GM12878 (cell line): ENCODE measurements at regions of chr7 and their contacts with region 1.

Region 1: GRCh38 chr7:94087664-94088352 is 83.7 kb upstream of the BET1 start:
- DNase-seq: peak; percentile 66
- ATAC-seq: peak; percentile 97
- H3K4me3 ChIP-seq: no peak overlapping the region
- H3K27ac ChIP-seq: no peak overlapping the region
- H3K4me1 ChIP-seq: no peaks in the 10 kb centered on the region
- H3K27me3 ChIP-seq: no peaks in the 10 kb centered on the region; a peak in 1 of 4 replicates
- CTCF ChIP-seq: peak; percentile 77 to 89 (median 87); a peak in 5 of 6 replicates
- EP300 ChIP-seq: no peak
- POLR2A ChIP-seq: no peak
- RAD21 ChIP-seq: peak; percentile 96

Region 2: GRCh38 chr7:93799750-93800357 is 288.0 kb before region 1 on chr7:
- CTCF ChIA-PET with region 1: interaction called, 16 read pairs
- POLR2A ChIA-PET with region 1: no interaction called
- RAD21 ChIA-PET with region 1: interaction called, 7 read pairs
- SMC1A ChIA-PET with region 1: interaction called, 8 read pairs
- in situ Hi-C with region 1: loop called (anchors 10 kb)
- intact Hi-C with region 1: loop called (anchors 1 kb)
- DNase-seq: no peak
- ATAC-seq: peak; percentile 54
- H3K4me3 ChIP-seq: no peak overlapping the region
- H3K27ac ChIP-seq: no peak overlapping the region
- H3K4me1 ChIP-seq: no peaks in the 10 kb centered on the region
- H3K27me3 ChIP-seq: no peaks in the 10 kb centered on the region
- CTCF ChIP-seq: peak; percentile 36 to 51 (median 41); a peak in 4 of 6 replicates
- EP300 ChIP-seq: no peak
- POLR2A ChIP-seq: no peak
- RAD21 ChIP-seq: peak; percentile 56

Region 3: GRCh38 chr7:93910076-93910994 is 177.5 kb before region 1 on chr7:
- CTCF ChIA-PET with region 1: interaction called, 32 read pairs
- POLR2A ChIA-PET with region 1: no interaction called
- RAD21 ChIA-PET with region 1: interaction called, 19 read pairs
- SMC1A ChIA-PET with region 1: interaction called, 49 read pairs
- in situ Hi-C with region 1: no loop called
- intact Hi-C with region 1: no loop called
- DNase-seq: no peak
- ATAC-seq: no peak
- H3K4me3 ChIP-seq: no peak overlapping the region
- H3K27ac ChIP-seq: no peak overlapping the region
- H3K4me1 ChIP-seq: no peaks in the 10 kb centered on the region
- H3K27me3 ChIP-seq: no peaks in the 10 kb centered on the region
- CTCF ChIP-seq: no peak
- EP300 ChIP-seq: no peak
- POLR2A ChIP-seq: no peak
- RAD21 ChIP-seq: no peak

Region 4: DNA sequence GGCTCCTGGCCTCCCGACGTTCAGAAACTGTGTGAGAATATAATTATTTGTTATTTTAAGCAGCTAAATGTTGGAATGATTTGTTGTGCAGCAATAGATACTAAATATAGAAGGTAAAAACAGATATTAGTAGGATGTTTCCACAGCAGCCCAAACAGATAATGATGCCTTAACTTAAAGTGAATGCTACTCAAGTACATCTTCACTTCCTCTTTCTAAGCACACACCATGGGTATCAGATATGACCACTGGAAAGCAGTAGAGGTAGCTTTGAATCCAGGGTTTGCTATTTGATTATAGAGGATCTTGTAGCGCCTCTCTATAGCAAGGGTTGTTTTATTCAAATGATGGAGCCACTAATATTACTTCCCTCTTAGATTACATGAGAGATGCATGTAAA is 45.4 kb before region 1 on chr7:
- CTCF ChIA-PET with region 1: interaction called, 10 read pairs
- POLR2A ChIA-PET with region 1: interaction called, 6 read pairs
- RAD21 ChIA-PET with region 1: interaction called, 19 read pairs
- SMC1A ChIA-PET with region 1: interaction called, 19 read pairs
- in situ Hi-C with region 1: no loop called
- intact Hi-C with region 1: no loop called
- DNase-seq: no peak
- ATAC-seq: peak; percentile 80
- H3K4me3 ChIP-seq: no peak overlapping the region
- H3K27ac ChIP-seq: no peak overlapping the region
- H3K4me1 ChIP-seq: no peaks in the 10 kb centered on the region; the same call in 1 of the 2 replicates
- H3K27me3 ChIP-seq: no peaks in the 10 kb centered on the region
- CTCF ChIP-seq: 0 out of 6 replicates have a peak, but pooled peaks of 1 of the 3 experiments have one; percentile 3
- EP300 ChIP-seq: 0 out of 4 replicates have a peak, but pooled peaks of 1 of the 2 experiments have one; percentile 40
- POLR2A ChIP-seq: no peak
- RAD21 ChIP-seq: no peak

Region 5: DNA sequence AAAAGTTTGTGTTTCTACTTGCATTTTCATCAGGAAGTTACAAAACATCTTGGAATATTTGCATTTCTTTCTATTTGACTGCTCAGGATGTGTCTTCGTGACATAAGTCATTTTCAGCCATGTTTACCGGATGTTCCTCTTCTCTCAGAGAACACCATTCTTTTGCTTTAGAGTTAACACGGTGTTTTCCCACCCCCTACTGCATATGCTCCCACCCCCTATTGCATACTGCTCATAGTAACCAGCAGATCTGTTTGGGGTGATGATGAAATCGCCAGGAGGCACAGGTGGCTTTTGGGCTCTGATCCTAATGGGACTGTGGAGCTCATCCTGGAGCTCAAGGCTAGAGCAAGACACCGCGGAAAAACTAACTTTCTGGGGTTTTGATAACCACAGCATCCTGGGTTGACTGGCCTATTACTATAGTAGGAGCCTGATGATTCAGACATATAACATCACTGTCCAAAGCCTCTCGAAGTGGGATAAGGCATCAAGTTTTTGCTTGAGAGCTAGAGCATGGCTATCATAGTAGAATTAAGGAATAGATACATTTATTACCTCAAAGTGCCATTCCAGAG is 18.6 kb before region 1 on chr7:
- CTCF ChIA-PET with region 1: interaction called, 23 read pairs
- POLR2A ChIA-PET with region 1: interaction called, 3 read pairs
- RAD21 ChIA-PET with region 1: interaction called, 10 read pairs
- SMC1A ChIA-PET with region 1: interaction called, 13 read pairs
- in situ Hi-C with region 1: no loop called
- intact Hi-C with region 1: no loop called
- DNase-seq: peak; percentile 21
- ATAC-seq: peak; percentile 56
- H3K4me3 ChIP-seq: no peak overlapping the region
- H3K27ac ChIP-seq: no peak overlapping the region
- H3K4me1 ChIP-seq: peaks cover 13% of the 10 kb centered on the region
- H3K27me3 ChIP-seq: no peaks in the 10 kb centered on the region
- CTCF ChIP-seq: no peak
- EP300 ChIP-seq: no peak
- POLR2A ChIP-seq: no peak
- RAD21 ChIP-seq: no peak

Region 6: DNA sequence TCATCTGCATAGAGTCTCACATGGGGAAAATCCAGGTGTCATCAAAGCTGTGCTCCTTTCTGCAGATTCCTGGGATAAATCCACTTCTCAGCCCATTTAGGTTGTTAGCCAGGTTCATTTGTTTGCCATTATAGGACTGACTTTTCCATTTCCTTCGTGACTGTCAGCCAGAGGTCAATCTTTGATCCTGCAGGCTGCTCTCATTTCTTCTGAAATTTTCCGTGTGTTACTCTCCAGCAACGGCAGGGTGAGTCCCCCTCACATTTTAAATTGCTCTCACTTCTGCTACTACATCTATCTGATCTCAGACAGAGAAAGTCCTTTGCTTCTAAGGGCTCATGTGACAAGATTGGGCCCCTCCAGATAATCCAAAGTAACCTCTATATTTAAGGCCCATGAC is 67.0 kb after region 1 on chr7:
- CTCF ChIA-PET with region 1: interaction called, 3 read pairs
- POLR2A ChIA-PET with region 1: no interaction called
- RAD21 ChIA-PET with region 1: interaction called, 3 read pairs
- SMC1A ChIA-PET with region 1: interaction called, 10 read pairs
- in situ Hi-C with region 1: no loop called
- intact Hi-C with region 1: no loop called
- DNase-seq: no peak
- ATAC-seq: peak; percentile 78
- H3K4me3 ChIP-seq: no peak overlapping the region
- H3K27ac ChIP-seq: no peak overlapping the region
- H3K4me1 ChIP-seq: no peaks in the 10 kb centered on the region
- H3K27me3 ChIP-seq: no peaks in the 10 kb centered on the region
- CTCF ChIP-seq: peak in 1 of 3 experiments; percentile 27; a peak in 1 of 6 replicates
- EP300 ChIP-seq: no peak
- POLR2A ChIP-seq: no peak
- RAD21 ChIP-seq: peak; percentile 27; the same call in 1 of the 2 replicates

Region 7: DNA sequence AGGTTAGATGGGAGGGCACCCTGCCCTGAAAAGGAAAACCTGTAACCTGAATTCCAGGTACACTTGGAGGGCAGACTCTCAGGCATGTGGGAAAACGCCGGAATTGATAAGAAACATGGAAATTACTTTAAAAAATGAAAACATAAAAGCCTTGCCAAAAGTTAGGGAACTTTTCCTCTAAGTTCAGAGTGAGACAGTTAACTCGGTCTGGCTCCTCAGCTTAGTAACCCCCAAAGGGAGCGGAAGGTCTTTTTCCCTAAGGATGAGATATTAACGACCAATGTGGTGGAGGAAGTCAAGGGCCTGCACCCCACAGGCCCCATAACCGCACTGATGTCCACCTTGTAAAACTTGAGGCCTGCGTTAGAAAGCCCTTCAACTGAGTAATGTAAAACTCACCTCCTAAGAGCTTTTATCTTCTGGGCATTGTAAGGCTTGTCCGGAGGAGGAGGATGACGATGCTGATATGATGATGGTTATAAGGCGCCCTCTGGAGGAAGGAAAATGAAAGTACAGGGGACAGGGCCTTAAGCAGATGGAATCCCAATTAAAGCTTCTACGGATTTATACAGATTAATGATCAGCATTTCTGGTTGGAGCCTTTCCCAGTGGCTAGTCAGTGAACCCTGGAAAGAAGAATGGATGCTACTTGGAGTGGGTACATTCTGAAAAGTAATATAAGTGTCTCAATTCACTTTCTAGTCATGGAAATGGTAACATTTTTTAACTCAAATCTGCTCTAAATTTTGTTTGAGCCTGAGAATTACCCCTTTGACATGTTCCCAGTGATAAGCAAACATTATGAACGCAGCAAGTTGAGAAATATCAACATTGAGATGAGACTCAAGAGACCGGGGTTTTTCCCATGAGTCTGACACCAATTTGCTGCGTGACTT is 307.6 kb after region 1 on chr7:
- CTCF ChIA-PET with region 1: interaction called, 6 read pairs
- POLR2A ChIA-PET with region 1: no interaction called
- RAD21 ChIA-PET with region 1: interaction called, 8 read pairs
- SMC1A ChIA-PET with region 1: interaction called, 5 read pairs
- in situ Hi-C with region 1: no loop called
- intact Hi-C with region 1: loop called (anchors 2 kb)
- DNase-seq: peak; percentile 12
- ATAC-seq: peak; percentile 93
- H3K4me3 ChIP-seq: no peak overlapping the region
- H3K27ac ChIP-seq: no peak overlapping the region
- H3K4me1 ChIP-seq: no peaks in the 10 kb centered on the region
- H3K27me3 ChIP-seq: peaks cover 2 to 3% of the 10 kb centered on the region in 2 experiments; a peak in 2 of 4 replicates
- CTCF ChIP-seq: peak; percentile 63 to 79 (median 76)
- EP300 ChIP-seq: no peak
- POLR2A ChIP-seq: no peak
- RAD21 ChIP-seq: peak; percentile 90